AG04450 (cell line): ENCODE measurements at regions of chr11 and their contacts with region 1.

Region 1: GRCh38 chr11:125404776-125405435 is 91.2 kb downstream of the FEZ1 start:
- DNase-seq: no peak
- H3K4me3 ChIP-seq: no peak overlapping the region
- H3K27ac ChIP-seq: no peak overlapping the region
- H3K27me3 ChIP-seq: peaks cover 22% of the 10 kb centered on the region
- CTCF ChIP-seq: peak; percentile 95

Region 2: GRCh38 chr11:124961972-124962609 is 442.8 kb before region 1 on chr11:
- CTCF ChIA-PET with region 1: interaction called, 15 read pairs
- POLR2A ChIA-PET with region 1: no interaction called
- DNase-seq: peak; percentile 74
- H3K4me3 ChIP-seq: no peak overlapping the region
- H3K27ac ChIP-seq: no peak overlapping the region
- H3K27me3 ChIP-seq: no peaks in the 10 kb centered on the region
- CTCF ChIP-seq: peak; percentile 79

Region 3: GRCh38 chr11:125315077-125315740 is 89.7 kb before region 1 on chr11:
- CTCF ChIA-PET with region 1: no interaction called
- POLR2A ChIA-PET with region 1: no interaction called
- DNase-seq: no peak
- H3K4me3 ChIP-seq: no peak overlapping the region
- H3K27ac ChIP-seq: no peak overlapping the region
- H3K27me3 ChIP-seq: peaks cover 6% of the 10 kb centered on the region
- CTCF ChIP-seq: no peak

Region 4: DNA sequence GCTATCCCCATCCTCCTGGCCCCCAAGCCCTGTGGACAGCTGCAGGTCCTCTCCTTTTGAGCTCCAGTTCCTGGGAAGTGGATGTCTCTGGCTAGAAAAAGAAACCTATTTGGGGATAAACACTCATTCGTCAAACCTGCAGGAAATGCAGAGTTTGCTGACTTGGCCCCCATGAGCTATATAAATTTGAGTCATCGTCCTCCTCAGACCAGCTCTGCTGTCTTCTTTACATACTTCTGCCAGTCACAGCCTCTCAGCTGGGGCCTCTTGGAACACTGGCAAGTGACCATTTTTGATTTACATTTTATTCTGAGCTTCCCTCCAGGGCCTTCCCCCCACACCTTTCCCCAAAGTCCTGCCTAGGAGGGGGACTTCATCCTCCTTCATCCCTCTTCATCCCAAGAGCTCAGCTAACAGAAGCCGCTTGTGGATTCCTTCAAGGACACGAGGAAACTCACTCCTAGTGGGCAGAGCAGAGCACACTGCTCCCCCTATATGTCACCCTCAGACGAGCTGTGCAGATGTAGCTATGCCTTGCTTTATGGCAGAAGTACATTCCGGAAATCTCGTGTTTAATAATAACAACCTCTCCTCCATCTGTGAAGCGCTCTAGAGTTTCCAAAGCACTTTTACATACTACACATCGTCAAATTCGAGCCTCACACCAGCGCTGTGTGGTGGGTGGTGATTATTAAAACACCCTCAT is 40.6 kb before region 1 on chr11:
- CTCF ChIA-PET with region 1: interaction called, 15 read pairs
- POLR2A ChIA-PET with region 1: no interaction called
- DNase-seq: no peak
- H3K4me3 ChIP-seq: no peak overlapping the region
- H3K27ac ChIP-seq: peak overlapping the region; percentile 22
- H3K27me3 ChIP-seq: no peaks in the 10 kb centered on the region
- CTCF ChIP-seq: peak; percentile 51

Region 5: GRCh38 chr11:125390946-125391345 is 14.0 kb before region 1 on chr11:
- CTCF ChIA-PET with region 1: interaction called, 11 read pairs
- POLR2A ChIA-PET with region 1: no interaction called
- DNase-seq: peak; percentile 43
- H3K4me3 ChIP-seq: no peak overlapping the region
- H3K27ac ChIP-seq: no peak overlapping the region
- H3K27me3 ChIP-seq: no peaks in the 10 kb centered on the region
- CTCF ChIP-seq: no peak

Region 6: GRCh38 chr11:125451400-125452124 is 46.7 kb after region 1 on chr11:
- CTCF ChIA-PET with region 1: interaction called, 11 read pairs
- POLR2A ChIA-PET with region 1: no interaction called
- DNase-seq: no peak
- H3K4me3 ChIP-seq: no peak overlapping the region
- H3K27ac ChIP-seq: no peak overlapping the region
- H3K27me3 ChIP-seq: no peaks in the 10 kb centered on the region
- CTCF ChIP-seq: no peak

Region 7: GRCh38 chr11:125481531-125481930 is 76.6 kb after region 1 on chr11:
- CTCF ChIA-PET with region 1: no interaction called
- POLR2A ChIA-PET with region 1: no interaction called
- DNase-seq: no peak
- H3K4me3 ChIP-seq: no peak overlapping the region
- H3K27ac ChIP-seq: no peak overlapping the region
- H3K27me3 ChIP-seq: no peaks in the 10 kb centered on the region
- CTCF ChIP-seq: no peak